AG04450 (cell line): ENCODE measurements at regions of chr6 and their contacts with region 1.

Region 1: GRCh38 chr6:28141500-28142329 is at the start of gene ZKSCAN8:
- DNase-seq: peak; percentile 54
- H3K4me3 ChIP-seq: peak within 1 kb of the TSS; percentile 95
- H3K27ac ChIP-seq: peak within 1 kb of the TSS; percentile 90
- H3K27me3 ChIP-seq: no peaks in the 10 kb centered on the region
- CTCF ChIP-seq: no peak
- polyA plus RNA-seq, gene ZKSCAN8: 11.5 and 15.0 TPM in 2 replicates

Region 2: GRCh38 chr6:28011722-28012121 is 130.0 kb before region 1 on chr6:
- CTCF ChIA-PET with region 1: no interaction called
- POLR2A ChIA-PET with region 1: no interaction called
- DNase-seq: no peak
- H3K4me3 ChIP-seq: no peak overlapping the region
- H3K27ac ChIP-seq: no peak overlapping the region
- H3K27me3 ChIP-seq: no peaks in the 10 kb centered on the region
- CTCF ChIP-seq: no peak

Region 3: GRCh38 chr6:28124102-28124970 is 17.4 kb before region 1 on chr6 and contains the start of gene ZSCAN16:
- CTCF ChIA-PET with region 1: no interaction called
- POLR2A ChIA-PET with region 1: interaction called, 14 read pairs
- DNase-seq: peak; percentile 52
- H3K4me3 ChIP-seq: peak within 1 kb of the TSS; percentile 93
- H3K27ac ChIP-seq: no peak within 1 kb of the TSS
- H3K27me3 ChIP-seq: no peaks in the 10 kb centered on the region
- CTCF ChIP-seq: no peak
- polyA plus RNA-seq, gene ZSCAN16: 2.7 and 3.2 TPM in 2 replicates

Region 4: DNA sequence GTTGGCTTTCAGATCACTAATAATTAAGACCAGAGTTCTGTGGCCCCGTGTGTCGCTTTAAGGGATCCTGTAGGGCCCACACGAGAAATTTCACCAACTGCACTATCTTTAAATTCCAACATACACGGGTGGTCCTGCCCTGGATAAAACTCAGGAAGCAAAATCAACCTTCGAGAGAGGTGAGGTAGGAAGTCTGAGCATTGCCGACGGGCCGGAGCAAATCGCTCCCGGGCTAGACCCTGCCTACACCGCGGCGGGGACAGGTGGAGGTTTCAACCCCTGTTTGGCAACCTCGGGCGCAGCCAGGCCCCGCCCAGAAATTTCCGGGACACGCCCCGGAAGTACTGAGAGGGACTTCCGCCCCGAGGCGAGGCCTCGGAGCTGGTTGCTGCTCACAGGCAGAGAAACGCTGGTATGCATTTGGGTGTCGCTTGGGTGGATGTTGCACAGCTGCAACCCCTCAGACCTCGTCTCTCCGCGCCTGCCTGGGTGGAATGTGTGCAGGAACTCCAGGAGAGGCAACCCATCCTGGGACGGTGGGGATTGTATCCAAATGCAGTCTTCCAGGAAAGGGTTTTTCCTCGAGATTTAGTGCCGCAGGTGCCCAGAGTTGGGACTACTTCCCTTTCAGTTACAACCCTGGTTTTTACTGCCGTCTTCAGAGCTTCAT is 19.8 kb after region 1 on chr6:
- CTCF ChIA-PET with region 1: interaction called, 3 read pairs
- POLR2A ChIA-PET with region 1: interaction called, 12 read pairs
- DNase-seq: peak; percentile 53
- H3K4me3 ChIP-seq: peak overlapping the region; percentile 69
- H3K27ac ChIP-seq: peak overlapping the region; percentile 58
- H3K27me3 ChIP-seq: no peaks in the 10 kb centered on the region
- CTCF ChIP-seq: no peak